Heart left ventricle (tissue), 16 donors: ENCODE measurements at regions of chr9 and their contacts with region 1.

Region 1: GRCh38 chr9:35267710-35268109 is 105.9 kb downstream of the UNC13B start:
- DNase-seq: no peak
- ATAC-seq: peak in 1 of 4 donors; percentile 10
- H3K4me3 ChIP-seq: no peak overlapping the region
- H3K27ac ChIP-seq: peak overlapping the region in 4 of 12 donors; percentile 9 to 46 (median 26)
- H3K4me1 ChIP-seq: peaks cover 0 to 30% (median 13%) of the 10 kb centered on the region in 12 donors
- H3K27me3 ChIP-seq: no peaks in the 10 kb centered on the region
- CTCF ChIP-seq: no peak
- POLR2A ChIP-seq: no peak

Region 2: GRCh38 chr9:35406183-35406956 is 138.7 kb after region 1 on chr9:
- intact Hi-C with region 1: no loop called
- DNase-seq: peak in 1 of 5 donors; percentile 70
- ATAC-seq: peak; percentile 17 to 72 (median 48)
- H3K4me3 ChIP-seq: no peak overlapping the region
- H3K27ac ChIP-seq: no peak overlapping the region
- H3K4me1 ChIP-seq: peaks cover 0 to 3% (median 0%) of the 10 kb centered on the region in 12 donors
- H3K27me3 ChIP-seq: no peaks in the 10 kb centered on the region
- CTCF ChIP-seq: no peak
- POLR2A ChIP-seq: no peak

Region 3: GRCh38 chr9:35470894-35471293 is 203.2 kb after region 1 on chr9:
- intact Hi-C with region 1: loop called in 2 of 10 experiments (anchors 5 to 10 kb)
- DNase-seq: no peak
- ATAC-seq: no peak
- H3K4me3 ChIP-seq: no peak overlapping the region
- H3K27ac ChIP-seq: no peak overlapping the region
- H3K4me1 ChIP-seq: no peaks in the 10 kb centered on the region
- H3K27me3 ChIP-seq: no peaks in the 10 kb centered on the region
- CTCF ChIP-seq: no peak
- POLR2A ChIP-seq: no peak